B cell (primary cell): ENCODE measurements at regions of chr5 and their contacts with region 1.

Region 1: DNA sequence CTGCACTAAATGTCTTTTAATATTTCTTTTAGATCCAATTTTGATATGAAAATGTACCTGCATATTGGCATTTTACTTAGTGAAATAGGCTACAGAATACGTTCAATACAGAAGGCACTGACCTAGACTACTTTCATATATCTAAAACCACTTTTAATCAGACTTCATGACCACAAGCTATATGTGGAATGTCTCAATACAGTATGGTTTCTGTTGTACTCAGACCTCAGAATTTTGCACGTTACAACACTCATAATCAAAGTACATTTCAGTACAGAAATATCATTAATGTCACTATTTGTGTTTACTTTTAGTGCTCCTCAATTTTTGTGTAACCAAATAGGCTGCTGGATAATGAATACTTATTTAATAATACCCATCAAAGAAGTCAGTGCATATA is 74.8 kb downstream of the MEF2C start:
- DNase-seq: no peak
- ATAC-seq: no peak
- H3K4me3 ChIP-seq: no peak overlapping the region
- H3K4me3 Mint-ChIP-seq: no peak overlapping the region
- H3K27ac ChIP-seq: peak overlapping the region in 1 of 2 donors; percentile 47
- H3K27ac Mint-ChIP-seq: no peak overlapping the region
- H3K4me1 ChIP-seq: peaks cover 25 to 38% of the 10 kb centered on the region in 2 donors
- H3K4me1 Mint-ChIP-seq: peaks cover 63% of the 10 kb centered on the region
- H3K27me3 ChIP-seq: no peaks in the 10 kb centered on the region
- H3K27me3 Mint-ChIP-seq: no peaks in the 10 kb centered on the region
- CTCF ChIP-seq: no peak

Region 2: DNA sequence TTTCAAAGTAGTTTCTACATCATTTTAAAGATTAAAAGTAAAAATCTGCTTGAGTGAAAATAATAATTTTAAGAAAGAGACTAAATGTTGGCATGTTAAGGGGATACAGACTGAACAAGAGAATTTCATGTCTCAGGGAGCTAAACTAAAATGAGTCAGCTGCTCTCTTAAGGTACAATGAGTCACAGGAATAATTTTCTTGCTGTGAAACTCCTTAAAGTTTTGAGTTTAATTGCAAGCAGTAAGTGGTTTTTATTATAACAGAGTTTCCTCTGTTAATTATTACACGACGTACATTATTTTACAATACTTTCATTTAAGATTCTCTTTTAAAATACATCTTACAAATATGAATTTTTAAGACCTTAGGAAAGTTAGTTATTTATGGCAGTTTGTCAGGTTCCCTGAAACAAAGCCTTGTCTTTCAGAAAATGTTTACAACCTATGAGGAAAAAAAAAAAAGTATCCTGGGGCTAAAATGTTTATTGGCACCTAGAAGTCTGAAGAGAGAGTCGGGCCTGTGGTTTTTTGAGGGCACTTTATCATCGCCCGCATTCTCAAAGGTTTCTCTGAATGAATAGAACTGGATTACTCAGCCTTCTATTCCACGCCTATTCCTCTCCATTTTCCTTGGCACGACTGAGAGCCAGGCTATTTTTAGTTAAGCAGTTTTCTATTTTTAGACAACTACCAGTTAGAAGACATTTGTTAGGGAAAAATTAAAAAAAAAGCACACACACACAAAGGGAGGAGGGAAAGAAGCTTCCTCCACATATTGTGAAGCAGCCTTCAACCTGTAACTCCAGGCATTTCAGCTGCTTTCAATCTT is 22.5 kb before region 1 on chr5:
- CTCF ChIA-PET with region 1: no interaction called
- POLR2A ChIA-PET with region 1: no interaction called
- intact Hi-C with region 1: loop called (anchors 2 kb)
- DNase-seq: no peak
- ATAC-seq: no peak
- H3K4me3 ChIP-seq: no peak overlapping the region
- H3K4me3 Mint-ChIP-seq: peak overlapping the region; percentile 78
- H3K27ac ChIP-seq: peak overlapping the region; percentile 43 to 84
- H3K27ac Mint-ChIP-seq: peak overlapping the region; percentile 85
- H3K4me1 ChIP-seq: peaks cover 14 to 21% of the 10 kb centered on the region in 2 donors
- H3K4me1 Mint-ChIP-seq: peaks cover 59% of the 10 kb centered on the region
- H3K27me3 ChIP-seq: no peaks in the 10 kb centered on the region
- H3K27me3 Mint-ChIP-seq: no peaks in the 10 kb centered on the region
- CTCF ChIP-seq: no peak

Region 3: GRCh38 chr5:88826646-88827585 is 18.8 kb after region 1 on chr5:
- CTCF ChIA-PET with region 1: interaction called, 4 read pairs
- POLR2A ChIA-PET with region 1: no interaction called
- intact Hi-C with region 1: loop called (anchors 2 kb)
- DNase-seq: peak; percentile 96
- ATAC-seq: peak; percentile 79
- H3K4me3 ChIP-seq: peak overlapping the region; percentile 3 to 61 (median 35)
- H3K4me3 Mint-ChIP-seq: peak overlapping the region; percentile 78
- H3K27ac ChIP-seq: peak overlapping the region; percentile 92 to 94
- H3K27ac Mint-ChIP-seq: peak overlapping the region; percentile 94
- H3K4me1 ChIP-seq: peaks cover 74 to 94% of the 10 kb centered on the region in 2 donors
- H3K4me1 Mint-ChIP-seq: peaks cover 83% of the 10 kb centered on the region
- H3K27me3 ChIP-seq: no peaks in the 10 kb centered on the region
- H3K27me3 Mint-ChIP-seq: no peaks in the 10 kb centered on the region
- CTCF ChIP-seq: no peak

Region 4: GRCh38 chr5:88833371-88834130 is 25.4 kb after region 1 on chr5:
- CTCF ChIA-PET with region 1: interaction called, 3 read pairs
- POLR2A ChIA-PET with region 1: interaction called, 10 read pairs
- intact Hi-C with region 1: no loop called
- DNase-seq: peak; percentile 65
- ATAC-seq: peak; percentile 66
- H3K4me3 ChIP-seq: peak overlapping the region in 3 of 5 experiments; percentile 1 to 47 (median 16)
- H3K4me3 Mint-ChIP-seq: peak overlapping the region; percentile 87
- H3K27ac ChIP-seq: peak overlapping the region; percentile 58 to 94
- H3K27ac Mint-ChIP-seq: peak overlapping the region; percentile 94
- H3K4me1 ChIP-seq: peaks cover 71 to 86% of the 10 kb centered on the region in 2 donors
- H3K4me1 Mint-ChIP-seq: peaks cover 77% of the 10 kb centered on the region
- H3K27me3 ChIP-seq: no peaks in the 10 kb centered on the region
- H3K27me3 Mint-ChIP-seq: no peaks in the 10 kb centered on the region
- CTCF ChIP-seq: no peak

Region 5: GRCh38 chr5:89028595-89029285 is 220.6 kb after region 1 on chr5:
- CTCF ChIA-PET with region 1: no interaction called
- POLR2A ChIA-PET with region 1: no interaction called
- intact Hi-C with region 1: no loop called
- DNase-seq: no peak
- ATAC-seq: no peak
- H3K4me3 ChIP-seq: no peak overlapping the region
- H3K4me3 Mint-ChIP-seq: no peak overlapping the region
- H3K27ac ChIP-seq: no peak overlapping the region
- H3K27ac Mint-ChIP-seq: no peak overlapping the region
- H3K4me1 ChIP-seq: no peaks in the 10 kb centered on the region
- H3K4me1 Mint-ChIP-seq: peaks cover 5% of the 10 kb centered on the region
- H3K27me3 ChIP-seq: no peaks in the 10 kb centered on the region
- H3K27me3 Mint-ChIP-seq: no peaks in the 10 kb centered on the region
- CTCF ChIP-seq: no peak

Region 6: DNA sequence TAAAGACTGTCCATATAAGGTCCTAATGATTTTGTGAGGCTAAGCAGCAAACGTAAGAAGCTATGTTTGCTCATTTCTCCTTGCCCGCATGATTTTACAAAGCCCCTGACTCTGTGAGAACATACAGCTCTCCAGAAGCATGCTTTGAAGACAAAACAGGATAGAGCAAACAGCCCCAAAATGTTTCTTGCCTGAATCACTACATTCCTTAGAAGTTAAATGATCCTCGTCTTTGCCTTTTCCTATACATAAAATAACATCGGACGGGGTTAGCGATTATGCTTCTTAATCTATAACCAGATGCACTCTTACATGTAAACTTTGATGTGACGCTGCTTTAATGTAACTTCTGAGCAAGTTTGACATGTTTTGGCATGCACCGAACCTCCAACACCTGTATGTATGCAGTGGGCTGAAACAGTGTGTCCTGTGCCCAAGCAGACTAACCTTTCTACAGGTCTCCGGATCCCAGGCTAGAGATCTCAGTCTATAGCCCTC is 1247.7 kb after region 1 on chr5:
- CTCF ChIA-PET with region 1: no interaction called
- POLR2A ChIA-PET with region 1: interaction called, 10 read pairs
- intact Hi-C with region 1: no loop called
- DNase-seq: no peak
- ATAC-seq: no peak
- H3K4me3 ChIP-seq: no peak overlapping the region
- H3K4me3 Mint-ChIP-seq: no peak overlapping the region
- H3K27ac ChIP-seq: no peak overlapping the region
- H3K27ac Mint-ChIP-seq: no peak overlapping the region
- H3K4me1 ChIP-seq: no peaks in the 10 kb centered on the region
- H3K4me1 Mint-ChIP-seq: no peaks in the 10 kb centered on the region
- H3K27me3 ChIP-seq: no peaks in the 10 kb centered on the region
- H3K27me3 Mint-ChIP-seq: peaks cover 3% of the 10 kb centered on the region
- CTCF ChIP-seq: no peak